Upper lobe of right lung (tissue), 1 donor: ENCODE measurements at regions of chr17 and their contacts with region 1.

Region 1: DNA sequence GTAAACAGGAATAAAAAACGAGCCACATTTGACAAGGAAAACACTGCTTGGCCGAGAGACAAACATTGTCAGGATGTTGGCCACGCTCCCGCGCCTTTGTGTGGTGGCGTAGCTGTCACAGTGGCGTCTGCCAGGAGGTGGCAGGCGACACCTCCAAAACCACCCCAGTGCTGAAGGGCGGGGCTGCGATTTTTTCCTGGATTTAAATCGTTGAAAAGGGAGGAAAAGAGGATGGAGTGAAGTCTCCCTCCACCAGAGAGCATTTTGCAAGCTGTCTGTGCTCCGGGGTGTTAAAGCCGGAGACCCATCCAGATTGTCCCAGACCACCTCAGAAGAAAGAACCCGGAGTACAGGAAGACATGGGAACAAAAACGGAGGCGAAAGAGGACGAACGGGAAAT is 12.7 kb downstream of the MRM3 start:
- DNase-seq: peak; percentile 84
- ATAC-seq: peak; percentile 84
- H3K4me3 ChIP-seq: peak overlapping the region; percentile 25
- H3K27ac ChIP-seq: peak overlapping the region; percentile 36
- H3K4me1 ChIP-seq: peaks cover 14% of the 10 kb centered on the region
- H3K27me3 ChIP-seq: no peaks in the 10 kb centered on the region
- CTCF ChIP-seq: peak; percentile 80

Region 2: GRCh38 chr17:882827-883585 is 88.1 kb after region 1 on chr17:
- intact Hi-C with region 1: no loop called
- DNase-seq: no peak
- ATAC-seq: peak; percentile 12
- H3K4me3 ChIP-seq: no peak overlapping the region
- H3K27ac ChIP-seq: peak overlapping the region; percentile 74
- H3K4me1 ChIP-seq: peaks cover 43% of the 10 kb centered on the region
- H3K27me3 ChIP-seq: no peaks in the 10 kb centered on the region
- CTCF ChIP-seq: no peak

Region 3: GRCh38 chr17:988561-988960 is 193.7 kb after region 1 on chr17:
- intact Hi-C with region 1: loop called (anchors 5 kb)
- DNase-seq: no peak
- ATAC-seq: no peak
- H3K4me3 ChIP-seq: no peak overlapping the region
- H3K27ac ChIP-seq: no peak overlapping the region
- H3K4me1 ChIP-seq: no peaks in the 10 kb centered on the region
- H3K27me3 ChIP-seq: no peaks in the 10 kb centered on the region
- CTCF ChIP-seq: no peak